HEK293 (cell line): ENCODE measurements at regions of chr1 and their contacts with region 1.

Region 1: DNA sequence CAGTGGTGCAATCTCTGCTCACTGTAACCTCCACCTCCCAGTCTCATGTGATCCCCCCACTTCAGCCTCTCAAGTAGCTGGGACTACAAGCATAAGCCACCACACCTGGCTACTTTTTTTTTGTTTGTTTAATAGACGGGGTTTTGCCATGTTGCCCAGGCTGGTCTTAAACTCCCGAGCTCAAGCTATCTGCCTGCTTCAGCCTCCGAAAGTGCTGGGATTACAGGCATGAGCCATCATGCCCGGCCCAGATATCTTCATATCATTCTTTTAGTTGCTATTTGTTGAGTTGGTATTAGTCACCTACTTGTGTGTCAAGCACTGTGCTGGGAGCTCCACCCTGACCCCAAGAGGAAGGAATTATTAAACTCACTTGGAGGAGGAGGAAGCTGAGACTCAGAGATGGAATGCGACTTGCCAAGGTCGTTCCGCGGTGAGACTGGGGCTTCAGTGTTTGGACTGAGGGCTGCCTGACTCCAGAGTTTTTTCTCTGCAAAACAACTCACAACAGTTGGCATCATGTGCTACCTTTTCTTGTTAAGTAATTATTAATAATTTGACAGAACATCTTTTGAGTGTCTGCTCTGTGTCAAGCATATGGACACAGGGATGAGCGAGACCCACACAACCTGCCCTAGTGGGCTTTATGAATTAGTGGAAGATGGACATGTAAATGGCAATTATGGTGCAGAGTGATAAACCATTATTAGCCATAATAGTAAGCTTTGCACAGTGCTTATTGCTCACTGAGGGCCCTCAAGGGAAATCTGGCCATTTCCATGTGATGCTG is 132.0 kb downstream of the FOXD2 start:
- H3K4me3 ChIP-seq: no peak overlapping the region
- H3K27ac ChIP-seq: no peak overlapping the region
- H3K4me1 ChIP-seq: peaks cover under 1% of the 10 kb centered on the region
- CTCF ChIP-seq: peak; percentile 31; the same call in 1 of the 2 replicates

Region 2: DNA sequence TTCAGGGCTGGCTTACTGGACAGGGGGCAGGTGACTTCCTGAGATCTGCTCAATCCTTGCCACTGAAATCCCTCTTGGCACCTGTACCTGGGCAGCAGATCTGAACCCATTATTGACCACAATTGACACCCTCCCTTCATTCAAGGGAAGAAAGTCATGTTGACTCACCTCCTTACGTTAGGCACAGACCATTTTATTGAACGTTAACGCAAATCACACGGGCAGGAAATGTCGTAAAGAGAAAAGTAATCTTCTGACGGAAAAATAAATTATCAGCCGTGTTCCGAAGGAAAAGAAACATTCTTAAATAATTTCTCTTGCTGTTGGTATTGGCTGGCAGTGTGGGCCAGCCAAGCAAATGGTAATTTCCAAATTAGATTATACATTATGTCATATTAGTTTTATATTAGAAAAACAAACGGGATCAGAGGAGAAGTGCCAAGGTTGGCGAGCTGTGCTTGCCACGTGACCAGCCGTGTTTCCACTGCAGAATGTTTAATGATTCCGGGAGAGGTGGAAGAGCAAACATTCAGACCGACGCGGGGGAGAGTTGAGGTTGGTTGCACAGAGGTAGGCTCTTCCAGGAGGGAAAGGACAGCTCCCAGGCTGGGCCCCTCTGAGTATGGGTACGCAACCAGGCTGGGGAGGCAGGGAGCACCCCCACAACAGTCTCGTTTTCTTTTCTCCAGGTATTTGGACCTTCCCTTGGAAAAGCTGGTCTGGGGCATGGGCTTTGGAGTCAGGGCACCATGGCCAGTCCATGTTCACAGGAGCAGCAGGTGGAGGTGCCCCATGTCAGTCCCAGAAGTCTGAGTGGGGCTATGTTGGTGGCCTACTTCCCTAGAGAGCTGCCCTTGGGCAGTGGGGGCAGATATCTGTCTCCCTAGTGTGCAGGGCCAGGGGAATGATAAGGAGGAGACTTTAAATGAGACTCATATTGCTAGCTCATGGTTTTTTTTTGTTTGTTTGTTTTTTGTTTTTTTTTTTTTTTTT is 11.0 kb before region 1 on chr1:
- CTCF ChIA-PET with region 1: interaction called, 22 read pairs
- POLR2A ChIA-PET with region 1: no interaction called
- H3K4me3 ChIP-seq: no peak overlapping the region
- H3K27ac ChIP-seq: peak overlapping the region; percentile 45; the same call in 1 of the 2 replicates
- H3K4me1 ChIP-seq: peaks cover 3% of the 10 kb centered on the region; the same call in 1 of the 2 replicates
- CTCF ChIP-seq: no peak

Region 3: GRCh38 chr1:47587891-47588582 is 18.2 kb after region 1 on chr1:
- CTCF ChIA-PET with region 1: interaction called, 17 read pairs
- POLR2A ChIA-PET with region 1: no interaction called
- H3K4me3 ChIP-seq: no peak overlapping the region
- H3K27ac ChIP-seq: peak overlapping the region; percentile 42; the same call in 1 of the 2 replicates
- H3K4me1 ChIP-seq: peaks cover 10% of the 10 kb centered on the region
- CTCF ChIP-seq: peak; percentile 47; the same call in 1 of the 2 replicates